AG04449 (cell line): ENCODE measurements at regions of chr14 and their contacts with region 1.

Region 1: GRCh38 chr14:73503648-73504047 is 12.9 kb downstream of the RIOX1 start:
- DNase-seq: peak; percentile 17
- H3K4me3 ChIP-seq: no peak overlapping the region
- CTCF ChIP-seq: no peak

Region 2: GRCh38 chr14:73526569-73526968 is 22.9 kb after region 1 on chr14:
- CTCF ChIA-PET with region 1: interaction called, 100 read pairs
- POLR2A ChIA-PET with region 1: no interaction called
- DNase-seq: no peak
- H3K4me3 ChIP-seq: no peak overlapping the region
- CTCF ChIP-seq: no peak

Region 3: DNA sequence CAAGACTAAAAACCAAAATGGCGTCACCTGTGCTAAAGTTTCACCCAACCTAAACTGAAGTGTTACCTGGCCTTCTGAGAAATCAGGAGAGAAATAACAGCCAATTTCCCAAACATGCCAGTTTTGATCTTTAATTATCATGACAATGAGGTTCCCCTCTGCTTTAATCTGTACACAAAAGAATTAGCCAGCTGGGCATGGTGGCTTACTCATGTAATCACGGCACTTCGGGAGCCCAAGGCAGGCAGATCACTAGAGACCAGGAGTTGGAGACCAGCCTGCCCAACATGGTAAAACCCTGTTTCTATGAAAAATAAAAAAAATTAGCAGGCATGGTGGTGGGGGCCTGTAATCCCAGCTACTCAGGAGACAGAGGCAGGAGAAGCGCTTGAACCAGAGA is 50.2 kb after region 1 on chr14:
- CTCF ChIA-PET with region 1: no interaction called
- POLR2A ChIA-PET with region 1: no interaction called
- DNase-seq: no peak
- H3K4me3 ChIP-seq: no peak overlapping the region
- CTCF ChIP-seq: no peak

Region 4: GRCh38 chr14:73568381-73568781 is 64.7 kb after region 1 on chr14:
- CTCF ChIA-PET with region 1: interaction called, 27 read pairs
- POLR2A ChIA-PET with region 1: interaction called, 4 read pairs
- DNase-seq: no peak
- H3K4me3 ChIP-seq: peak overlapping the region; percentile 68
- CTCF ChIP-seq: no peak

Region 5: DNA sequence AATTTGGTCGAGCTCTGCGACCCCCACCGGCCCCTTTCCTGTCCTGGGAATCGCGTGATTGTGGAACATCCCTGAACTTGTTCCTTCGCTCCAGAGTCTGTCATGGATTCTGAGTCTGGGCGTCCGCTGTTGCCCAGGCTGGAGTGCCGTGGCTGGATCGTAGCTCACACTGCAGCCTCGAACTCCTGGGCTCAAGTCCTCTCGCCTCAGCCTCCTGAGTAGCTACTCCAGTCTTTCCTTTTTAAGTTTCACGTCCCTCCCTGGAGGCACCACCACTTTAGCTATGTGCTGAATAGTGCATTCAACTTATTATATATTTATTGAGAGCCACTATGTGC is 109.4 kb after region 1 on chr14:
- CTCF ChIA-PET with region 1: interaction called, 17 read pairs
- POLR2A ChIA-PET with region 1: no interaction called
- DNase-seq: no peak
- H3K4me3 ChIP-seq: peak overlapping the region; percentile 64
- CTCF ChIP-seq: no peak

Region 6: DNA sequence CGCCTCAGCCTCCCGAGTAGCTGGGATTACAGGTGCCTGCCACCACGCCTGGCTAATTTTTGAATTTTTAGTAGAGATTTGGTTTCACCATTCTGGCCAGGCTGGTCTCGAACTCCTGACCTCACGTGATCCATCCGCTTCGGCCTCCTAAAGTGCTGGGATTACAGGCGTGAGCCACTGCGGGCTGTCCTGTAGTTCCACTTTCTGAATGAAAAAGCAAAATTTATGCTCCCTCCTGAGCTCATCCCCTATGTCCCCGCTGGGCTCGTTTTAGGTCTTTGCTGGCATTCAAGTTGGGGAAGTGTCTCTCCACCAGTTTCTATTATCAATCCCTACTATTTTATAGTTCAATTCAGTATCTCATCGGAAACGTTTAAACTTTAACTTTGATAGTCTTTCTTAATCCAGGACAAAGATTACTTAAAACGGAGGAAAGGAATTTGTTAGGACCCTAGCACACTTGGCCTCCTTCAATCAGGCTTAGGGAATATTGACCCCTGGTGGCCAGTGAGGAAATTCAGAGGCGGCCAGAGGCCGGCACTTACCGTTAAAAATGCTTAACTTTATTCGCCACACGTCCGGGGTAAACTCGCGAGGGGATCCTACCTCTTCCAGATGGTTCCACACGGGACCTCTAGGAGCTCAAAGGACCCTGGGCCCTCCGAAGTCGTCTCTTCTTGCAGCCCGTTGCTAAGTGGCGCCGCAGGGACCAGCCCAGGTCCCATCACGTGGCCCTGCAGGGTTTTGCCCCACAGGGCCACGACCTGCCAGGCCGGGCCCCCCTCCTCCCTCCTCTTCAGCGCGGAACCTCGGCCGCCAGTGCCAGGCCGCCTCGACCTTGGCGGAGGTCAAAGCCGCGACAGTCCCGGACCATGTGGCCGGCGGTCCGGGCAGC is 129.7 kb after region 1 on chr14:
- CTCF ChIA-PET with region 1: interaction called, 199 read pairs
- POLR2A ChIA-PET with region 1: no interaction called
- DNase-seq: no peak
- H3K4me3 ChIP-seq: peak overlapping the region; percentile 52
- CTCF ChIP-seq: peak; percentile 71